Activated CD8-positive, alpha-beta memory T cell treated with anti-CD3 and anti-CD28 coated beads, Interleukin-2, amount 10 ng/mL, durations not matched to agents 7 days and 5 days (primary cell): ENCODE measurements at regions of chr9 and their contacts with region 1.

Region 1: GRCh38 chr9:122125158-122125508 is 32.0 kb upstream of the TTLL11 start:
- DNase-seq: peak; percentile 83
- ATAC-seq: peak; percentile 83
- H3K4me3 Mint-ChIP-seq: no peak overlapping the region
- H3K27ac Mint-ChIP-seq: no peak overlapping the region
- H3K4me1 Mint-ChIP-seq: peaks cover 21% of the 10 kb centered on the region
- H3K27me3 Mint-ChIP-seq: peaks cover 34% of the 10 kb centered on the region

Region 2: GRCh38 chr9:122092611-122093506 is 32.3 kb before region 1 on chr9 and contains the start of gene TTLL11:
- CTCF ChIA-PET with region 1: interaction called, 294 read pairs
- DNase-seq: peak; percentile 97
- ATAC-seq: peak; percentile 95
- H3K4me3 Mint-ChIP-seq: peak within 1 kb of the TSS; percentile 77
- H3K27ac Mint-ChIP-seq: peak within 1 kb of the TSS; percentile 34
- H3K4me1 Mint-ChIP-seq: peaks cover 23% of the 10 kb centered on the region
- H3K27me3 Mint-ChIP-seq: peaks cover 29% of the 10 kb centered on the region
- total RNA-seq, gene TTLL11: 2.2 to 2.5 TPM

Region 3: DNA sequence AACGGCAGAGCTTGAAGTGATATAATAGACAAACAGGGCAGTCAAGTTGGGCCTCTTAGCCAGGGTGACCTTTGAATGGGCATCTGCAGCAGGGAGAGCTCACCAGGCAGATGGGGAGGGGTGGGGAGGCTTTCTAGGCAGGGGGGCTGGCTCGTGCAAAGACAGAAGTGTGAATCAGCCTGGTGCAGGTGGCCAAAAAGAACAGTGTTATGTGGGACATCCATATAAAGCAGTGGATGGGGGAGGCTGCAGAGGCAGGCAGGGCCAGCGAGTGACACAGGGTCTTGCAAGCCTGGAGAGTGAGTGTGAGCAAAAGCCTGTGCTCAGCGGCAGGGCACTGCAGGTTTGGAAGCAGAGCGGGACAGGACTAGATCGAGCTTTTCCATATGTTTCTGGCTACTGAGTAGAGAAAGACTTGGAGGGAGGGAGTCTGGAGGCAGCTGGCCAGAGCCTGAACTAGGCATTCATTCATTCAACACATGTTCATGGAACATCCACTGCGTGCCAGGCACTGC is 17.8 kb before region 1 on chr9:
- CTCF ChIA-PET with region 1: interaction called, 24 read pairs
- DNase-seq: no peak
- ATAC-seq: no peak
- H3K4me3 Mint-ChIP-seq: no peak overlapping the region
- H3K27ac Mint-ChIP-seq: no peak overlapping the region
- H3K4me1 Mint-ChIP-seq: no peaks in the 10 kb centered on the region
- H3K27me3 Mint-ChIP-seq: no peaks in the 10 kb centered on the region

Region 4: GRCh38 chr9:122309861-122310260 is 184.7 kb after region 1 on chr9:
- CTCF ChIA-PET with region 1: no interaction called
- DNase-seq: no peak
- ATAC-seq: no peak
- H3K4me3 Mint-ChIP-seq: no peak overlapping the region
- H3K27ac Mint-ChIP-seq: no peak overlapping the region
- H3K4me1 Mint-ChIP-seq: peaks cover 2% of the 10 kb centered on the region
- H3K27me3 Mint-ChIP-seq: no peaks in the 10 kb centered on the region

Region 5: DNA sequence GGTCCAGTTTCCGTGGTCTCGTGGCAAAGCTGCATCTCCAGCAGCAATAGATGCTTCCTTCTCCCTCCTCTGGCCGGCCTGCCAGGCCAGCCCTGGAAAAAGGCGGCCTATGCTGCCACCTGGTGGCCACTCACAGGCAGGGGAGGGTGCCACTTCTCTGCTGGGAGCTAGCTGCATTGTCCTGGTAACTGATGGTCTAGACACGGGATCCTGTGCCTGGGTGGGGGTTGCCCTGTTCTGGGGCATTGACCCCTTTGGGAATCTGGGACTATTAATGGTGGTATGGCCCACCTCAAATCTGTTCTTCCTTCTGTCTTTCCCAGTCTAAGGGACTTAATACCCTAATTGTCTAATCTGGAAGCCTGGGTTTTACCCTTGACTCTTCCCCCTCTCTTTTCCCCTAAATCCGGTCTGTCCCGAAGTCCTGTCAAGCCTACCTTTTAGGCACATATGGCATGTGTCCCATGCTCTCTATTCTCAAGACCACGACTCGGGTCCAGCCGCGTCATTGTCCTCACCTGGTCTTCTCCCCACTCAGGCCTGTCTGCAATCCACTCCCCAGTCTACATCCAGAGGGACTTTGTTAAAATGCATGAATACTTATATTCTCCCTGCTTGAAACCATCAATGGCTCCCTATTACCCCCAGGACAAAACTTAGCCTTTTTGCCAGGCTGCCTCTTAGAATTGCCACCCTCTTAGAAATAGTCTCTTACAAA is 225.7 kb after region 1 on chr9:
- CTCF ChIA-PET with region 1: interaction called, 304 read pairs
- DNase-seq: peak; percentile 86
- ATAC-seq: peak; percentile 88
- H3K4me3 Mint-ChIP-seq: no peak overlapping the region
- H3K27ac Mint-ChIP-seq: no peak overlapping the region
- H3K4me1 Mint-ChIP-seq: peaks cover 26% of the 10 kb centered on the region
- H3K27me3 Mint-ChIP-seq: peaks cover 25% of the 10 kb centered on the region

Region 6: GRCh38 chr9:122464633-122465567 is 339.8 kb after region 1 on chr9:
- CTCF ChIA-PET with region 1: interaction called, 11 read pairs
- DNase-seq: peak; percentile 80
- ATAC-seq: peak; percentile 84
- H3K4me3 Mint-ChIP-seq: peak overlapping the region; percentile 83
- H3K27ac Mint-ChIP-seq: peak overlapping the region; percentile 91
- H3K4me1 Mint-ChIP-seq: peaks cover 14% of the 10 kb centered on the region
- H3K27me3 Mint-ChIP-seq: peaks cover 42% of the 10 kb centered on the region